Naive thymus-derived CD8-positive, alpha-beta T cell (primary cell): ENCODE measurements at regions of chr7 and their contacts with region 1.

Region 1: GRCh38 chr7:332646-333392 is 42.8 kb downstream of the FOXL3 start:
- DNase-seq: peak; percentile 75 to 98 (median 90)
- ATAC-seq: peak; percentile 99
- H3K4me3 Mint-ChIP-seq: peak overlapping the region in 3 of 10 donors; percentile 51 to 63 (median 54)
- H3K27ac Mint-ChIP-seq: no peak overlapping the region
- H3K4me1 Mint-ChIP-seq: peaks cover 11 to 25% (median 19%) of the 10 kb centered on the region in 4 donors
- H3K27me3 Mint-ChIP-seq: peaks cover 0 to 3% (median 0%) of the 10 kb centered on the region in 5 donors

Region 2: DNA sequence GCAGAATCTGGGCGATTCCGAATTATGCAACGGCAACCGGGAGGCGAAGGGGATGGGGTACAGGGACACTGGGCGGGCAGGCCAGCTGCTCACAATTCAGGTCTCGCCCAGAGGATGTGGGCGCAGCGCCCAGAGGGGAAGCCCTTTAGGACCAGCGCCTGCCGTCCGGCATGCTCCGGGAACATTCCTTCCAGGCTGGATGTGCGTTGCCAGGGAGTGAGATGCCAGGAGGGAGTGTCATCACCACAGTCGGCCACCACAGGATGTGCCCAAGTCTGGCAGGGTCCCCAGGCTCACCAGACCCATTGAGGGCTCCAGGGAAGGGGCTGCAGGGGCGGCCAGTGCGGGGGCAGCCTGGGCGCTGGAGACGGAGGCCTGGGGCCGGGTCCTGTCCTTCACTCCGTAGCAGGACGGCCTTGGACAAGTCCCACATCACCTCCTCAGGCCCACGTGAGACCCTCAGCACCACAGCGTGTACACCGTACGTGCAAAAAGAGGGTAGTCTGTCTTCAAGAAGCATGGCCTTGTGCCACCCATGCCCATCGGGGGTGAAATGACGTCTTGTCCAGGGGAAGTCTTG is 21.0 kb after region 1 on chr7:
- POLR2A ChIA-PET with region 1: interaction called, 12 read pairs
- DNase-seq: no peak
- ATAC-seq: no peak
- H3K4me3 Mint-ChIP-seq: peak overlapping the region in 1 of 10 donors; percentile 45
- H3K27ac Mint-ChIP-seq: peak overlapping the region in 3 of 10 donors; percentile 19 to 56 (median 51)
- H3K4me1 Mint-ChIP-seq: peaks cover 18 to 37% (median 23%) of the 10 kb centered on the region in 4 donors
- H3K27me3 Mint-ChIP-seq: no peaks in the 10 kb centered on the region

Region 3: DNA sequence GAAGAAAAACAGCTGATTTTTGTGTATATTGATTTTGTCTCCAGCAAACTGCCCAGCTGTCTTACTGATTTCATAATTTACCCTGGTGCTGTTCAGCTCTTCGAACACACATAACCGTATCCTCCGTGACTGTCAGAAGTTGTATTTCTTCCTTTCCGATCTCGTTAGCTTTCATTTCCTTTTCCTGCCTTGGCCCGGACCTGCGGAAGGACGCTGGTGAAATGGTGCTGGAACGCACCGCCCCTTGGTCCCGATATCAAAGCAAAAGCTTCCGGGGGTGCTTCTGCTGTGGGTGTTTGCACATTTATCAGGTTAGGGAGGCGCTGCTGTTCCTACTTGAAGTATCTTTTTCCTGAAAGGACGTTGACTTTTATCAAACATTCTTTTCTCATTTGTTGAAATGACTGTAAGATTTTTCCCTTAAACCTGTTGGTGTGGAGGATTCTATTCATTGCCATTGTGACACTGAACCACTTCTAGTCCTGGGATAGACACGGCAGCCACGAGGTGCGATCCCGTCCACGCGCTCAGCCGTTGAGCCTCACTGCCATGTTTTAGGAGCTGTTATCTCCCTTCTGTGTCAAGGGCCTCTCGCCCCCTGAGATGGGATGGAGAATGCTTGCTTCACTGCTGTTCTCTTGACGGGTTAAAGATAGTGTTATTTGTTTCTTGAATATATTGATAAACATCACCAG is 29.7 kb after region 1 on chr7:
- POLR2A ChIA-PET with region 1: interaction called, 13 read pairs
- DNase-seq: peak; percentile 28 to 76 (median 60)
- ATAC-seq: peak; percentile 61 to 68
- H3K4me3 Mint-ChIP-seq: peak overlapping the region; percentile 62 to 88 (median 79)
- H3K27ac Mint-ChIP-seq: peak overlapping the region; percentile 84 to 97 (median 94)
- H3K4me1 Mint-ChIP-seq: peaks cover 51 to 85% (median 72%) of the 10 kb centered on the region in 4 donors
- H3K27me3 Mint-ChIP-seq: peaks cover 0 to 9% (median 0%) of the 10 kb centered on the region in 5 donors